ENCODE measurements at regions of chr18 and their contacts with region 1.

Region 1: GRCh38 chr18:54679318-54680149 is 88.5 kb downstream of the DYNAP start:
- DNase-seq: peak; percentile 88
- ATAC-seq: peak; percentile 93
- H3K4me3 ChIP-seq: no peak overlapping the region
- H3K27ac ChIP-seq: no peak overlapping the region
- H3K4me1 ChIP-seq: no peaks in the 10 kb centered on the region; the same call in 1 of the 2 replicates
- H3K27me3 ChIP-seq: no peaks in the 10 kb centered on the region
- CTCF ChIP-seq: peak; percentile 89

Region 2: DNA sequence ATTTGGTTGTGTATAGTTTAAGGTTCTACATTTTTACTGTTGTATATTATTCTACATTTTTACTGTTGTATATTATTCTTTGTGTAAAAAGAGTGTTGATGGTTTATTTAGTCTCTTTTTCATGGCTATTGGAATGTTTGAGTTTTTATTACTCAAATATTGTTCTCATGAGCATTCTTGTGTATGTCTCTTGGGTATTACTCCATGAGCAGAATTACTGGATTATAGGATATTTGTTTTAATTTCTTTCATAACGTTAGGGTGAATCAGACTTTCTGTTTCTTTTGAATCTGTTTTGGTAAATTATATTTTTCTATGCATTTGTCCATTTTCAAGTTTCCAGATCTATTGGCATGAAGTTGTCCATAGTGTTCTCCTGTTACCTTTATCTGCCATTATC is 23.2 kb after region 1 on chr18:
- CTCF ChIA-PET with region 1: no interaction called
- POLR2A ChIA-PET with region 1: no interaction called
- intact Hi-C with region 1: no loop called
- DNase-seq: no peak
- ATAC-seq: no peak
- H3K4me3 ChIP-seq: no peak overlapping the region
- H3K27ac ChIP-seq: no peak overlapping the region
- H3K4me1 ChIP-seq: no peaks in the 10 kb centered on the region
- H3K27me3 ChIP-seq: no peaks in the 10 kb centered on the region
- CTCF ChIP-seq: no peak

Region 3: DNA sequence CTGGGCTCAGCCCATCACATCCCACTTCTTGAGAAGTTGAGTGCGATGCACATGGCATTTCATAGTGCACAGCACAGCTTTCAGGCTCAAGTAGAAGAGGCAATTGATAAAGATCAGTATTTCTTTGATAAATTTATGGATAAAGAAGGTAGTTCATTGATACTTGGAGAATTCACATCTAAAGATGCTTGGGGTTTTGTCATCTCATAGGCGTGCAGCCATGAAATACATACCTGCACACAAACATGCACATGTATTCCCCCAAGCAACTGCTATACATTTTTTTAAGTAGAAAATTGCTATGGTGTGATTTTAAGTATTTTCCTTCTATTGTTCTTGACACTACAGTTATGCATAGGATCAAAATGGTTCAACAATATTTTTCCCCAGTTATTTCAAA is 43.0 kb after region 1 on chr18:
- CTCF ChIA-PET with region 1: no interaction called
- POLR2A ChIA-PET with region 1: no interaction called
- intact Hi-C with region 1: no loop called
- DNase-seq: no peak
- ATAC-seq: no peak
- H3K4me3 ChIP-seq: no peak overlapping the region
- H3K27ac ChIP-seq: no peak overlapping the region
- H3K4me1 ChIP-seq: 0 out of 2 replicates have a peak, but pooled peaks cover 6% of the 10 kb centered on the region
- H3K27me3 ChIP-seq: no peaks in the 10 kb centered on the region
- CTCF ChIP-seq: no peak

Region 4: GRCh38 chr18:54766619-54767018 is 87.1 kb after region 1 on chr18:
- CTCF ChIA-PET with region 1: no interaction called
- POLR2A ChIA-PET with region 1: no interaction called
- intact Hi-C with region 1: loop called (anchors 2 kb)
- DNase-seq: peak; percentile 75
- ATAC-seq: peak; percentile 47
- H3K4me3 ChIP-seq: peak overlapping the region; percentile 54
- H3K27ac ChIP-seq: peak overlapping the region; percentile 99
- H3K4me1 ChIP-seq: peaks cover 56% of the 10 kb centered on the region
- H3K27me3 ChIP-seq: no peaks in the 10 kb centered on the region
- CTCF ChIP-seq: no peak

Region 5: DNA sequence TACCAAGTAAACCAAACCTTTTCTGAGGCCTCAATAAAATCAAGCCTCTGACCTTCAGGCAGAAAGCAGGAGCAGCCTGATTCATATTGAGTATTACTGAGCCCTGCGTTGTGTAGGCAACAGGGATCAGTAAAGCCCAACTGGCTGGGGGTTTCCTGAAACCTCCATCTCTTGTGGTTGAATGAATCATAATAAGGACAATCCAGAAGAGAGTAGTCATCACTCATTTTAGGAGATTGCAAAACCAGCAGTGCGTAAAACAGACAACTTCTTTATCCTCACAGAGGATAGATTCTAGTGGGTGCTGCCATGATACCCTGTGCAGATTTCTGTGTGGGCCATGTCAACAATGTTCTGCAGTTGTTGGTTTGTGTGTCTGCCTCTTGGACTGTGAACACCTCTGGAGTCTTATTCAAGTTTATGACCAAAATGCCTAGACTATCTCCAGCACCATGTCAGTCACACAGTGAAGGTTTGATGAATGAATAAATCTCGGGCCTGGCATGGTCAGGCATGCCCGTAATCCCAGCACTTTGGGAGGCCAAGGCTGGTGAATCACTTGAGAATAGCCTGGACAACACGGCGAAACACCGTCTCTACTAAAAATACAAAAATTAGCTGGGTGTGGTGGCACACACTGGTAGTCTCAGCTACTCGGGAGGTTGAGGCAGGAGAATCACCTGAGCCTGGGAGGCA is 96.9 kb after region 1 on chr18:
- CTCF ChIA-PET with region 1: interaction called, 4 read pairs
- POLR2A ChIA-PET with region 1: no interaction called
- intact Hi-C with region 1: loop called (anchors 1 kb)
- DNase-seq: peak; percentile 97
- ATAC-seq: peak; percentile 90
- H3K4me3 ChIP-seq: no peak overlapping the region; the same call in 1 of the 2 replicates
- H3K27ac ChIP-seq: peak overlapping the region; percentile 98
- H3K4me1 ChIP-seq: peaks cover 43% of the 10 kb centered on the region
- H3K27me3 ChIP-seq: no peaks in the 10 kb centered on the region
- CTCF ChIP-seq: no peak

Region 6: GRCh38 chr18:54983041-54983686 is 303.6 kb after region 1 on chr18:
- CTCF ChIA-PET with region 1: interaction called, 6 read pairs
- POLR2A ChIA-PET with region 1: no interaction called
- intact Hi-C with region 1: loop called (anchors 1 kb)
- DNase-seq: peak; percentile 82
- ATAC-seq: peak; percentile 86
- H3K4me3 ChIP-seq: no peak overlapping the region
- H3K27ac ChIP-seq: no peak overlapping the region
- H3K4me1 ChIP-seq: peaks cover 9% of the 10 kb centered on the region; the same call in 1 of the 2 replicates
- H3K27me3 ChIP-seq: no peaks in the 10 kb centered on the region
- CTCF ChIP-seq: peak; percentile 81